ENCODE measurements at regions of chr17 and their contacts with region 1.

Region 1: GRCh38 chr17:7887482-7888183 is 956 bp upstream of the CHD3 start:
- DNase-seq: peak; percentile 96

Region 2: DNA sequence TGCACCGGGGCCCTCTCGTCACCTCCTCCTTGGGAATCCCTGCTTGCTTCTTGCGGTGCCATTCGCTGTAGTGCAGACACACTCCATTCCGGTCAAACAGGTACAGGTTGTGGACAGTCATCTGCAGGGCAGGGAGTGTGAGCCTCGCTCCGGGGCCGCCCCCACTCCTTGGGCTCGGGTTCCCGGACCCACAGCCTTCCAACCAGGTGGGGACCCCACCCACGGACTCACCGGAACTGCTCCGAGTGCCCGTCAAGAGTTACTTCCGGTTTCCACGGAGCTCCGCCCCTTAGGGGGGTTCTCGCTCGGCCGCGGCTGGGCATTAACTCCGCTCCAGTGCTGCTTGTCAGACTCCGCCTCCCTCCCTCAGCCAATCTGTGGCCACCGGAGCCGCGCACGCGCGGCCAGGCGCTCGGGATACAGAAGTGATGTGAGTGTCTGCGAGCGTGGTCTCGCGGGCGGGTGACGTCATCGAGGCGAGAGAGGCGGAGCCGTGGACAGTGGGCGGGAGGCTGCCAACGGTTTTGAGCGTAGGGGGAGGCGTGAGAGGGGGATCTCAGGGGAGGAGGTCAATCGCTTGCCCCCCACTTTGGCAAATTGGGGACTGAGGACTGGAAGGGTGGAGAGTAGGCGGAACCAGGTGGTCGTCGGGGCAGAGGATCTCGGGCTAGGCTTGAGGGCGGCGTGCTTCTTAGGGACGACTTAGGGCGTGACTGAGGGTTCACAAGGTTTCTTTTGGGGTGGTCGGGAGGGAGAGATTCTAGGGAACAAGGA is 44.3 kb after region 1 on chr17 and contains the starts of genes CNTROB and TRAPPC1:
- intact Hi-C with region 1: loop called in 1 of 2 experiments (anchors 1 kb)
- DNase-seq: peak; percentile 100
- total RNA-seq, gene CNTROB: 14.7 to 15.2 TPM
- total RNA-seq, gene TRAPPC1: 53.7 to 72.7 TPM

Measured in posterior vena cava (tissue), 2 donors.